ENCODE measurements at regions of chr5 and their contacts with region 1.

Region 1: DNA sequence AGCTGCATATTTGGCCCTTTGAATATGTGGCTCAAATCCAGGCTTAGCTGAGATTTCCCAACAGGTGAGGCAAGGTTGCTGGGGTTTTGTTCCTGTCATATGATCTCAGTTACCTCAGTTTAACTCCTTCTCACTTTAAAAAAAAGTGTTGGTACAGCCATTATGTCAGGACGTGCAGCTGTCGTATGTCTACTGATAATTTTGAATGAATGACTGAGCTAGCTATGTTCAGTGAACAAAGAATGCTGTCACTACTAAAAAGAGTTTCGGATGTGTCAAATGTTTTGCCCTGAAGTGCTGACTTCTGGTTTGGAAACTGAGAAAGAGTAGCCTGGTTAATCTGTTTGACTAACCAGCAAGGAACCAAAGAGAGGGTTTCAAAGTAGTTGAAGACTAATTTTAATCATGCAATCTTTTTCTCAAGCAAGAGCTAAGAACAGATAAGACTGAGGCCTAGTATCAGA is 106.3 kb upstream of the NR3C1 start:
- DNase-seq: peak in 1 of 3 donors; percentile 61
- ATAC-seq: peak; percentile 25 to 56 (median 38)
- H3K4me3 ChIP-seq: no peak overlapping the region
- H3K27ac ChIP-seq: peak overlapping the region in 1 of 3 donors; percentile 89
- H3K4me1 ChIP-seq: peaks cover 0 to 52% (median 18%) of the 10 kb centered on the region in 4 donors
- H3K27me3 ChIP-seq: no peaks in the 10 kb centered on the region
- CTCF ChIP-seq: no peak
- POLR2A ChIP-seq: no peak

Region 2: DNA sequence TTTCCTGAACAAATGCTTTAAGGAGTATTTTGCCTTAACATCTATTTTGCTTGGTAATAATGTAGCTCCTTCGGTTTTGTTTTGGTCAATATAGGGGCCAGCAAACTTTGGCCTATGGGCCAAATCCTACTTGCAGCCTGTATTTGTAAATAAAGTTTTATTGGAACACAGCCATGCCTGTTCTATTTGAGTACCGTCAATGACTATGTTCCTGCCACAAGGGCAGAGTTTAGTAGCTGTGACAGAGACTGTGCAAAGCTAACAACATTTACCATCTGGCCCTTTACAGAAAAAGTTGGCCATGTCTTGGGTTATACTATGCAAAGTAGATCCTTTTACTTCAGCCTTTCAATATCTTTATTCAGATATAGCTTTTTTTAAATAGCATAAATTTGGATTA is 219.7 kb before region 1 on chr5:
- intact Hi-C with region 1: no loop called
- DNase-seq: no peak
- ATAC-seq: peak; percentile 60 to 89 (median 74)
- H3K4me3 ChIP-seq: no peak overlapping the region
- H3K27ac ChIP-seq: peak overlapping the region in 1 of 3 donors; percentile 7
- H3K4me1 ChIP-seq: peaks cover 0 to 8% (median 0%) of the 10 kb centered on the region in 4 donors
- H3K27me3 ChIP-seq: no peaks in the 10 kb centered on the region
- CTCF ChIP-seq: peak in 1 of 4 donors; percentile 18
- POLR2A ChIP-seq: no peak

Region 3: GRCh38 chr5:143685246-143685802 is 175.5 kb after region 1 on chr5:
- intact Hi-C with region 1: loop called in 1 of 2 experiments (anchors 10 kb)
- DNase-seq: no peak
- ATAC-seq: peak; percentile 85 to 94 (median 89)
- H3K4me3 ChIP-seq: no peak overlapping the region
- H3K27ac ChIP-seq: no peak overlapping the region
- H3K4me1 ChIP-seq: no peaks in the 10 kb centered on the region
- H3K27me3 ChIP-seq: no peaks in the 10 kb centered on the region
- CTCF ChIP-seq: peak; percentile 45 to 66 (median 61)
- POLR2A ChIP-seq: no peak